Breast epithelium (tissue), 4 donors: ENCODE measurements at regions of chr1 and their contacts with region 1.

Region 1: DNA sequence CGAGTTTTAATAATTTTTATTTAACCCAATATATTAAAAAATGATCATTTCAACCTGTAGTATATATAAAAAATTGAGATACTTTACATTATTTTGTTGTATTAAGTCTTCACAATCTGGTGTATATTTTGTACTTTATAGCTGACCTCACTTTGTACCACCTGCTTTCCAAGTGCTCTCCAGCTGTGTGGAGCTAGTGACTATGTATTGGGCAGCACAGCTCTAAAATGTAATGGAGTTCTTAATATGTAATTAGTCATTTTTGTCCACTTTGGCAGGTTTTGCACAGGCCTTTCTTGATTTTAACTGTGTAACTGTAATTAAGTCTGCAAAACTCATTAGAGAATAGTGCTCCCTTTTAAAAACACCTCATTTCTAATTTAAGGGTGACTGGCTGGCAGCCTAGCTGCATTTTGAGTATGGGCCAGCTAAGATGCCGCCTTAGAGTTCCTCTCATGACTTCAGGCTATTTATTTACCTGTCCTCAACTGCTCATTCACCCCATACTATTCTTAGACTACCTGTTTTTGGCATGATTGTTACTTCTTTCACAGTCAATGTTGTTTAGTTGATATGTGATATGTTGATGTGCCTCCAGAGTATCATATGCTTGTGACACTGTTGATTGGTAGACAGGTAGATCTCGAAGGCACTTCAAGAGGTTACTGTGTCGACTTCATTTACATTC is 43.2 kb downstream of the ZYG11B start:
- DNase-seq: no peak
- H3K4me3 ChIP-seq: no peak overlapping the region
- H3K27ac ChIP-seq: no peak overlapping the region
- H3K4me1 ChIP-seq: no peaks in the 10 kb centered on the region
- H3K27me3 ChIP-seq: no peaks in the 10 kb centered on the region
- CTCF ChIP-seq: no peak
- POLR2A ChIP-seq: no peak

Region 2: DNA sequence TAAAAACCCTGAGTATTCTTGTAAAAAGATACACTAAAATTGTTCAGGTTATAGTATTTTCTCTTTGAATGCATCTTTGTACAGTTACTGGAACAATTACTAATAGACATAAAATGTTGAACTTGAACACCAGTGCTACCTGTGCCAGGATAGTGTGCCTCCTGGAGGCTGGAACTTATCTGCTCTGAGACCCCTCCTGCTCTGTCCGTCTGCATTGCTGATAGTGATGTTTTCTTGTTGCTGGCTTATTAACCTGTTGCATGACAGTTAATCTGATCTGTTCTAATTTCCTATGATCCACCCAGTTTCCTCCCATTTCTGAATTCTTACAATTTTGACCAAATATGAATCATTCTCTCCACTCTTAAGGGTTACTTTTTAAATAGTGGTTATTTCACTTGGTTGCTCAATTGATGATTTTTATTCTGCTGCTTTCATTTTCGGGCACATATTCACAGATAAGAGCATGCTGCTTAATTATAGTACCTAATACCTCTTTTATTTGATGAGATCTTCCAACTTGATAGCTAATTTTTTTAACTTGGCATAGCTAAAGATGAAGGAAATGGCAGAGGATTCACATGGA is 504.9 kb before region 1 on chr1:
- intact Hi-C with region 1: loop called (anchors 5 kb)
- DNase-seq: no peak
- H3K4me3 ChIP-seq: no peak overlapping the region
- H3K27ac ChIP-seq: no peak overlapping the region
- H3K4me1 ChIP-seq: no peaks in the 10 kb centered on the region
- H3K27me3 ChIP-seq: no peaks in the 10 kb centered on the region
- CTCF ChIP-seq: no peak
- POLR2A ChIP-seq: no peak

Region 3: GRCh38 chr1:52748119-52748518 is 21.4 kb before region 1 on chr1:
- intact Hi-C with region 1: no loop called
- DNase-seq: no peak
- H3K4me3 ChIP-seq: no peak overlapping the region
- H3K27ac ChIP-seq: no peak overlapping the region
- H3K4me1 ChIP-seq: no peaks in the 10 kb centered on the region
- H3K27me3 ChIP-seq: no peaks in the 10 kb centered on the region
- CTCF ChIP-seq: no peak
- POLR2A ChIP-seq: no peak